ENCODE measurements at regions of chr13 and their contacts with region 1.

Region 1: DNA sequence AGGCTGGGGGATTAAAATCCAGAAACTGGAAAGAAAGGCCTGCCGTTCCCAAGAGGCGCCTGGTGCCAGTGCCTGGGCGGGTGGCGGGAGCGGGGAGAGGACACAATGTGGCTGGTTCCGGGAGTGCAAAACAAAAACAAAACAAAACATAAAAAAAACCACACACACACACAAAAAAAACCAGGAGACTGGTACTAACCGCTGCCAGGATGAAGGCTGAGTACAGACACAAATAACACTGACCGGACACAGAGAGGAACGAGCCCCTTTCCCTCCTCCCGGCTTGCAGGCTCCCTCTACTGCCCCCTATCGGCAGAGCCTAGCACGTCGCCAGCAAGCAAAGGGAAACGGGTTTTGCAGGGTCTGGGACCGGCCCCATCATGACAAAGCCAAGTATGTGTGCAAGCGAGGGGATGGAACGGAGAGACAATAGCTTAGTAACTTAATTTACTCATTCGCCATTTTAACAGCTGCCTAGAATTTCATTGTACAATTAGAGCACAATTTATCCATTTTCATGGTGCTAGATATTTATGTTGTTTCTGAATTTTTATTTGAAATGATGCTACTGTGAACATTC is 17.9 kb upstream of the ZDHHC20 start:
- DNase-seq: peak; percentile 66 to 85 (median 73)
- H3K4me3 ChIP-seq: peak overlapping the region; percentile 10
- H3K4me3 Mint-ChIP-seq: peak overlapping the region; percentile 29 to 83 (median 80)
- H3K27ac ChIP-seq: no peak overlapping the region
- H3K27ac Mint-ChIP-seq: peak overlapping the region in 7 of 8 donors; percentile 0 to 80 (median 53)
- H3K4me1 ChIP-seq: peaks cover 9% of the 10 kb centered on the region
- H3K4me1 Mint-ChIP-seq: peaks cover 14 to 18% (median 14%) of the 10 kb centered on the region in 3 donors
- H3K27me3 ChIP-seq: no peaks in the 10 kb centered on the region
- H3K27me3 Mint-ChIP-seq: peaks cover 1 to 2% of the 10 kb centered on the region in 2 donors

Region 2: DNA sequence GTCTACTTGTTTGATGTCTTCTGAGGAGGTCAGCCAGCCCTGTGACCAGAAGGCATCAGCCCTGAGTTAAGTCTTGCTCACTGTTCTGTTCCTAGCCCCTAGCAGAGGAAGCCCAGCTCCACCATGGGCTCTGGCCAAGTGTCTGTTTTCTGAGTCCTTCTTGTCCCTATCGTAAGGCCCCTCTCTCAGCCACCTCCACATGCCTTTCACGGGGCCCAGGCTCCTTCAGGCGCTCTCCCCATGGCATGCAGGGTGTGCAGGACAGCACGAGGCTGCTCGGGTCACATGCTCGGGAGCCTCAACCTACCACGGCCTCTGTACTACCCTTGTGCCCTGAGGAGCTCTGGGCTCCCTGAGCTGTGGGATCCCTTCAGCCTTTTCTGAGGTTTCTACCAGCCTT is 367.8 kb before region 1 on chr13:
- CTCF ChIA-PET with region 1: interaction called, 68 read pairs
- POLR2A ChIA-PET with region 1: no interaction called
- DNase-seq: no peak
- H3K4me3 ChIP-seq: no peak overlapping the region
- H3K4me3 Mint-ChIP-seq: no peak overlapping the region
- H3K27ac ChIP-seq: no peak overlapping the region
- H3K27ac Mint-ChIP-seq: peak overlapping the region in 1 of 8 donors; percentile 14
- H3K4me1 ChIP-seq: no peaks in the 10 kb centered on the region
- H3K4me1 Mint-ChIP-seq: peaks cover 0 to 3% (median 2%) of the 10 kb centered on the region in 3 donors
- H3K27me3 ChIP-seq: no peaks in the 10 kb centered on the region
- H3K27me3 Mint-ChIP-seq: no peaks in the 10 kb centered on the region

Region 3: GRCh38 chr13:21176220-21176982 is 300.6 kb before region 1 on chr13 and contains the starts of genes MRPL57 and SKA3:
- CTCF ChIA-PET with region 1: interaction called, 15 read pairs
- POLR2A ChIA-PET with region 1: no interaction called
- DNase-seq: peak; percentile 89 to 96 (median 93)
- H3K4me3 ChIP-seq: peak within 1 kb of the TSS; percentile 57
- H3K4me3 Mint-ChIP-seq: peak within 1 kb of the TSS; percentile 96 to 100 (median 97)
- H3K27ac ChIP-seq: peak within 1 kb of the TSS; percentile 82
- H3K27ac Mint-ChIP-seq: peak within 1 kb of the TSS; percentile 94 to 99 (median 96)
- H3K4me1 ChIP-seq: peaks cover 17% of the 10 kb centered on the region
- H3K4me1 Mint-ChIP-seq: peaks cover 15 to 37% (median 25%) of the 10 kb centered on the region in 3 donors
- H3K27me3 ChIP-seq: no peaks in the 10 kb centered on the region
- H3K27me3 Mint-ChIP-seq: no peaks in the 10 kb centered on the region
- total RNA-seq, gene MRPL57: 28.4 to 28.8 TPM
- total RNA-seq, gene SKA3: 28.3 to 33.3 TPM

Region 4: DNA sequence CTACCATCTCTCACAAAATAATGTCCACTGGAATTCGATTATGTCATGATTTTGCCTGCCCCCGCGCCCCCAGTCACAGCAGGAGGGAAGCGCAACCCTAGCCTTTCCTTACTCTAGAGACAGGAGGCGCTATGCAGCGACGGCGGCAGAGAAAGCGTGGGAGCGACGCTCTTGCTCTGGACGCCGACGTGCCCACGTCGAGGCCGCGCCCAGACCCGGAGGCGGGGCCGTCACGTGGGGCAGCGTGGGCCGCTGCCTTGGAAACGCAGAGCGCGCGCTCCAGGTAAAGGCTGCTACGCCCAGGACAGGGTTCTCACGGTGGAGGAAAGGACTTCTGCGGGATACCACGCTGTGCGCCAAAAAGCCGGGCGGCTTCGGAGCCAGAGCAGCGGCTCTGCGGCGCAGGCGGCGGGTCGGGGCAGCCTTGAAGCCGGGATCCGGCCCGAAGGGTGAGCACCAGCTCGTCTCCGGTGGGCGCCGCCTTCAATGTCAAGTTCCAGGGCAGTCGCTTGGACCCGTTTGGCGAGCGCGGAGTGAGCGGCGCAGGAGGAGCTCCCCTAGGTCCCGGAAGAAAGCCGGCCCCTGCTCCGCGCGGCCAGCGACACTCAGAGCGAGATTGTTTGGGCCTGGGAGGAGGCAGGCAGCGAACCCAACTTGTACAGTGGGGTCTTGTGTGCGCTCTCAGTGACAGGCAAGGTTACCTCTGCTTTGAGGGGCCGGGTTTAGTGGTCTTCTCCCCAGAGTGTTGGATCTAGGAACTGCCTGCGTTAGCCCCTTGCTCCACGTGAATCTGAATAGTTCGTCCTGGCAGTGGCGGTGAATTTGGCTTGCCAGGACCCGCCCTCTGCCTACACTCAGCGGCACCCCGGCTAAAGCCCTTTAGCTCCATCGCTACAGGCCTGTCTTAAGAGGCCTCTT is 178.8 kb before region 1 on chr13:
- CTCF ChIA-PET with region 1: interaction called, 63 read pairs
- POLR2A ChIA-PET with region 1: interaction called, 3 read pairs
- DNase-seq: peak; percentile 78 to 89 (median 83)
- H3K4me3 ChIP-seq: peak overlapping the region; percentile 80
- H3K4me3 Mint-ChIP-seq: peak overlapping the region; percentile 82 to 95 (median 88)
- H3K27ac ChIP-seq: peak overlapping the region; percentile 66
- H3K27ac Mint-ChIP-seq: peak overlapping the region; percentile 54 to 92 (median 82)
- H3K4me1 ChIP-seq: peaks cover 11% of the 10 kb centered on the region
- H3K4me1 Mint-ChIP-seq: peaks cover 20 to 27% (median 20%) of the 10 kb centered on the region in 3 donors
- H3K27me3 ChIP-seq: no peaks in the 10 kb centered on the region
- H3K27me3 Mint-ChIP-seq: no peaks in the 10 kb centered on the region

Region 5: GRCh38 chr13:21435710-21436151 is 41.3 kb before region 1 on chr13:
- CTCF ChIA-PET with region 1: no interaction called
- POLR2A ChIA-PET with region 1: no interaction called
- DNase-seq: peak in 4 of 5 donors; percentile 8 to 66 (median 24)
- H3K4me3 ChIP-seq: no peak overlapping the region
- H3K4me3 Mint-ChIP-seq: peak overlapping the region in 6 of 7 donors; percentile 24 to 60 (median 57)
- H3K27ac ChIP-seq: no peak overlapping the region
- H3K27ac Mint-ChIP-seq: peak overlapping the region; percentile 4 to 77 (median 56)
- H3K4me1 ChIP-seq: peaks cover 22% of the 10 kb centered on the region
- H3K4me1 Mint-ChIP-seq: peaks cover 45 to 72% (median 71%) of the 10 kb centered on the region in 3 donors
- H3K27me3 ChIP-seq: no peaks in the 10 kb centered on the region
- H3K27me3 Mint-ChIP-seq: no peaks in the 10 kb centered on the region

Region 6: GRCh38 chr13:21458813-21459701 is 17.9 kb before region 1 on chr13 and contains the start of gene ZDHHC20:
- CTCF ChIA-PET with region 1: interaction called, 31 read pairs
- POLR2A ChIA-PET with region 1: no interaction called
- DNase-seq: peak; percentile 84 to 91 (median 87)
- H3K4me3 ChIP-seq: peak within 1 kb of the TSS; percentile 76
- H3K4me3 Mint-ChIP-seq: peak within 1 kb of the TSS; percentile 94 to 97 (median 96)
- H3K27ac ChIP-seq: peak within 1 kb of the TSS; percentile 87
- H3K27ac Mint-ChIP-seq: peak within 1 kb of the TSS; percentile 93 to 98 (median 94)
- H3K4me1 ChIP-seq: peaks cover 28% of the 10 kb centered on the region
- H3K4me1 Mint-ChIP-seq: peaks cover 41 to 53% (median 47%) of the 10 kb centered on the region in 3 donors
- H3K27me3 ChIP-seq: no peaks in the 10 kb centered on the region
- H3K27me3 Mint-ChIP-seq: peaks cover 0 to 4% of the 10 kb centered on the region in 2 donors
- total RNA-seq, gene ZDHHC20: 50.4 to 58.8 TPM

Region 7: DNA sequence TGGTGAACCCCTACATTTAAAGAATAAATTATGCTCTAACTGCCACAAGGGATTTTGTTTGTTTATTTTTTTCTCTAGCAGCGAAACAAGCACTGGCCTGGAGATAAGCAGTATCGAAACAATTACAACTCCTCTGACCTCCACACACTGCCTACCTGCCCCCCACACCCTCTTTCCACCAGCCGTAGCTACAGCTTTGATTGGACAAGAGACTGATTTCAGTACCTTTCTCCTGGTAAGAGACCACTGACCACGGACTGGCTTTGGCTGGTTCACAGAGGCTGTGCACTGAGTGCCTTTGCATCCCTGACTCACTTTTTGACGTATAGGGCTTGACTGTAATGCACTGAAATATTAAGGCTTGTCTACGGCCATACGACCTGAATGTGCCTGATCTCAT is 10.5 kb before region 1 on chr13:
- CTCF ChIA-PET with region 1: interaction called, 12 read pairs
- POLR2A ChIA-PET with region 1: no interaction called
- DNase-seq: no peak
- H3K4me3 ChIP-seq: no peak overlapping the region
- H3K4me3 Mint-ChIP-seq: no peak overlapping the region
- H3K27ac ChIP-seq: no peak overlapping the region
- H3K27ac Mint-ChIP-seq: no peak overlapping the region
- H3K4me1 ChIP-seq: no peaks in the 10 kb centered on the region
- H3K4me1 Mint-ChIP-seq: no peaks in the 10 kb centered on the region
- H3K27me3 ChIP-seq: no peaks in the 10 kb centered on the region
- H3K27me3 Mint-ChIP-seq: peaks cover 5% of the 10 kb centered on the region in 2 donors

Region 8: DNA sequence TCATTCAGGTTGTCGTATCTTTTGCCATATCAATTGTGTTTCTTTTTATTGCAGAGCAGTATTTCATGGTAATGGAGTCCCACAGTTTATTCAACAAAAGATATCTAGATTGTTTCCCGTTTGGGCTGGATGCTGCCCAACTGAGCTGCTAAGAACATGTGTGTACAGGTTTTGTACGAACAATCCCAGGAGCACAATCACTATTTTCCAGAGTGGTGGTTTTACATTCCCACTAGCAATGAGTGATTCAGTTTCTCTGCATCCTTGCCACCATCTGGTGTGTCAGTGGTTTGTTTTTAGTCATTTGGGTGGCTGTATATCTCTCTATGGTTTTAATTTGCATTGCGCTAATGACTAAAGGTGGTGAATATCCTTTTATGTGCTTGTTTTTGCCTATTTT is 34.9 kb after region 1 on chr13:
- CTCF ChIA-PET with region 1: no interaction called
- POLR2A ChIA-PET with region 1: no interaction called
- DNase-seq: no peak
- H3K4me3 ChIP-seq: no peak overlapping the region
- H3K4me3 Mint-ChIP-seq: no peak overlapping the region
- H3K27ac ChIP-seq: no peak overlapping the region
- H3K27ac Mint-ChIP-seq: no peak overlapping the region
- H3K4me1 ChIP-seq: no peaks in the 10 kb centered on the region
- H3K4me1 Mint-ChIP-seq: peaks cover 0 to 3% (median 0%) of the 10 kb centered on the region in 3 donors
- H3K27me3 ChIP-seq: no peaks in the 10 kb centered on the region
- H3K27me3 Mint-ChIP-seq: no peaks in the 10 kb centered on the region